A549 (cell line): ENCODE measurements at regions of chr5 and their contacts with region 1.

Region 1: DNA sequence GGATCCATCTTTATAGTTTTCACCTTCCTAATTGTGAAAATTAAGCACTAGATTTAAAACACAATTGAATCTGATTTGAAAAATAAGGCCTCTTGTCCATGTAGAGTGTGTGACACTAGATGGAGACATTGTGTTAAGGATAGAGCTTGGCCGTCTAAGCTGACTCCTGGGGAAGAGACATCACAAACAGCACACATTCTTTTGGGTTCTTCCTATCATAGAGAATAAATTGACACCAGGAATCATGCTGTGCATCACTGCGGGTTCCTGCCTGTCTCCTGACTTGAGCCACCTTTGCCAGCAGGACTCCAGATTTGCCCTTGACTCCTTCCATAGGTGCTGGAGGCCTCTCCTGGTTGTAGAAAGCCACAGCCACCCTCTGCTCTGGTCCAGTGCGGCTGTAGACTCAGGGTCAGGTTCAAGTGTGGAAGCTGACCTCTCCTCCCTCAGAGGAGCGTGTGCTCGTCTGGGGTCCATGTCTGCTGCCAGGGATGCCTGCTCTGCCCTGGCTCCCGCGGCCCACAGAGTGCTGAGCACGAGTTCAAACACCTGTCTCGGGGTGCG is 11.2 kb downstream of the ROPN1L start:
- DNase-seq: peak; percentile 85 to 91
- ATAC-seq: peak; percentile 68 to 78
- H3K4me3 ChIP-seq: no peak overlapping the region
- H3K27ac ChIP-seq: peak overlapping the region; percentile 66 to 84
- H3K4me1 ChIP-seq: peaks cover 50% of the 10 kb centered on the region
- CTCF ChIP-seq: peak; percentile 94
- EP300 ChIP-seq: no peak
- POLR2A ChIP-seq: no peak
- RAD21 ChIP-seq: peak; percentile 97 to 100

Region 2: GRCh38 chr5:10441083-10441991 is 11.5 kb before region 1 on chr5 and contains the start of gene ROPN1L:
- CTCF ChIA-PET with region 1: interaction called, 25 read pairs
- POLR2A ChIA-PET with region 1: no interaction called
- DNase-seq: peak; percentile 87 to 90
- ATAC-seq: peak; percentile 95 to 97
- H3K4me3 ChIP-seq: peak within 1 kb of the TSS; percentile 57
- H3K27ac ChIP-seq: peak within 1 kb of the TSS; percentile 67 to 85
- H3K4me1 ChIP-seq: peaks cover 7% of the 10 kb centered on the region; the same call in 1 of the 3 replicates
- CTCF ChIP-seq: no peak
- EP300 ChIP-seq: no peak
- POLR2A ChIP-seq: peak; percentile 83
- RAD21 ChIP-seq: no peak
- polyA plus RNA-seq, gene ROPN1L: 1.4 and 1.5 TPM in 2 replicates

Region 3: DNA sequence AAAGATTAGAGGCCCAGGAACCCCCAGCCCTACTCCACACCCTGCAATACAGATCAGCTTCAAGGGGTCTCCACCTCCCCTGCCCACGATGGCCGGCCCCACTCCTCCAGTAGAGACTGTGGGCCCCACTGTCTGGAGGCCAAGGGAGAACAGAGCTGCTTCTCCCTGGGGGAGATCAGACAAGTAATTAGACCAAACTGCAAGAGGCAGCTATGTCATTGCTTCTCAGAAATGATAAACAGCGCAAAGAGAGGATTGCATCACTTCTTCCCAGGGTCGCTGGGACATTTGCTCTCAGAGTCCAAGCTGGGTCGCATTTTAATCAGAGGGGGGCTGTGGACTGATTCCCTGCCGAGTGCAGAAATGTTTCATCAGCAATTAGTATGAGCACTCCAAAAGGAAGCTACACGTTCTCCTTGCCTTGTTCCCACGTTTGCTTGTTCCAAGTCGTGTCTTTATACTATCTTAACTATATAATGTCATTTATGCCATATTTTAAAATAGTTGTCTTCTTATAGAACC is 48.8 kb after region 1 on chr5:
- CTCF ChIA-PET with region 1: interaction called, 12 read pairs
- POLR2A ChIA-PET with region 1: no interaction called
- DNase-seq: no peak
- ATAC-seq: no peak
- H3K4me3 ChIP-seq: no peak overlapping the region
- H3K27ac ChIP-seq: peak overlapping the region; percentile 56 to 71; a peak in 5 of 6 replicates
- H3K4me1 ChIP-seq: peaks cover 57% of the 10 kb centered on the region
- CTCF ChIP-seq: no peak
- EP300 ChIP-seq: no peak
- POLR2A ChIP-seq: no peak
- RAD21 ChIP-seq: no peak

Region 4: GRCh38 chr5:10577371-10578292 is 124.8 kb after region 1 on chr5:
- CTCF ChIA-PET with region 1: interaction called, 15 read pairs
- POLR2A ChIA-PET with region 1: no interaction called
- DNase-seq: no peak
- ATAC-seq: peak in 1 of 2 experiments; percentile 47; a peak in 3 of 6 replicates
- H3K4me3 ChIP-seq: no peak overlapping the region
- H3K27ac ChIP-seq: peak overlapping the region in 1 of 2 experiments; percentile 26; a peak in 3 of 6 replicates
- H3K4me1 ChIP-seq: peaks cover 33% of the 10 kb centered on the region
- CTCF ChIP-seq: no peak
- EP300 ChIP-seq: no peak
- POLR2A ChIP-seq: no peak
- RAD21 ChIP-seq: no peak

Region 5: DNA sequence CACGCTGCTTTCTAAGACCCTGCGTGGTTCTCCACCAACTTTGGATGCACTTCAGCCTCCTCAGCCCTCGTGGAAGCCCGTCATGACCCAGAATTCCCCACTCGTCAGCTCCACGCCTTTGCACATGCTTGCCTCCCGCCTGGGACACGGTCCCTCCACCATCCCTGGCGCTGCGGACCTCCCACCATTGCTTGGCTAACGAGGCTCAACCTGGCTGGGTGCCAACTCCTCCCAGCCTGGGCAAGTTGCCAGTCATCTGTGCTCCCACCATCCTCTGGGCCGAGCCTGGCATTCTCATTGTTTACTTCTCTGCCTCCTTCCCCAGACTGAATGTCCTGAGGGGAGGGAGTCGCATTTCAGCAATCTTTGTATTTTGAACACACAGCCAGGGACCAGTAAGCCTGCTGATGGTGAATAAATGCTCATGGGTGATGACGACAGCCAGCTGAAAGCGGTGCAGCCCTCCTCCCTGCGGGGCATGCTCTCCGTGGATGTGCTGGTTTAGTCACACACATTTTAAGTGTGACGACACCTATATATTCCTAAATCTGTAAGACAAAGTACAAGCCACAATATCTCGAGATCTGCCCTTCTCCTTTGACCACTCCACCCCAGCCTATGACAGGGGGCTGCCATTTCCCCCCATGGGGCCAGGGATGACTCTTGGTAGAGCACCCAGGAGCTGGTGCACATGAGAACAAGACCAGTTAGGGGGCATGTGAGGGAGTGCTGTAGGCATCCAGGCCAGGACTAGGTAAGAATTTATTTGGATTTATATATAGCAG is 148.6 kb after region 1 on chr5:
- CTCF ChIA-PET with region 1: interaction called, 13 read pairs
- POLR2A ChIA-PET with region 1: no interaction called
- DNase-seq: peak; percentile 69 to 90
- ATAC-seq: peak; percentile 83 to 89
- H3K4me3 ChIP-seq: peak overlapping the region; percentile 18; the same call in 2 of the 3 replicates
- H3K27ac ChIP-seq: peak overlapping the region; percentile 77 to 87
- H3K4me1 ChIP-seq: peaks cover 43% of the 10 kb centered on the region
- CTCF ChIP-seq: no peak
- EP300 ChIP-seq: no peak; a peak in 1 of 5 replicates
- POLR2A ChIP-seq: no peak
- RAD21 ChIP-seq: no peak; a peak in 1 of 5 replicates

Region 6: GRCh38 chr5:10635257-10635866 is 182.5 kb after region 1 on chr5:
- CTCF ChIA-PET with region 1: interaction called, 19 read pairs
- POLR2A ChIA-PET with region 1: no interaction called
- DNase-seq: no peak
- ATAC-seq: no peak
- H3K4me3 ChIP-seq: no peak overlapping the region
- H3K27ac ChIP-seq: no peak overlapping the region
- H3K4me1 ChIP-seq: peaks cover 5% of the 10 kb centered on the region; the same call in 1 of the 3 replicates
- CTCF ChIP-seq: no peak
- EP300 ChIP-seq: no peak
- POLR2A ChIP-seq: no peak
- RAD21 ChIP-seq: no peak